AG04449 (cell line): ENCODE measurements at regions of chr2 and their contacts with region 1.

Region 1: DNA sequence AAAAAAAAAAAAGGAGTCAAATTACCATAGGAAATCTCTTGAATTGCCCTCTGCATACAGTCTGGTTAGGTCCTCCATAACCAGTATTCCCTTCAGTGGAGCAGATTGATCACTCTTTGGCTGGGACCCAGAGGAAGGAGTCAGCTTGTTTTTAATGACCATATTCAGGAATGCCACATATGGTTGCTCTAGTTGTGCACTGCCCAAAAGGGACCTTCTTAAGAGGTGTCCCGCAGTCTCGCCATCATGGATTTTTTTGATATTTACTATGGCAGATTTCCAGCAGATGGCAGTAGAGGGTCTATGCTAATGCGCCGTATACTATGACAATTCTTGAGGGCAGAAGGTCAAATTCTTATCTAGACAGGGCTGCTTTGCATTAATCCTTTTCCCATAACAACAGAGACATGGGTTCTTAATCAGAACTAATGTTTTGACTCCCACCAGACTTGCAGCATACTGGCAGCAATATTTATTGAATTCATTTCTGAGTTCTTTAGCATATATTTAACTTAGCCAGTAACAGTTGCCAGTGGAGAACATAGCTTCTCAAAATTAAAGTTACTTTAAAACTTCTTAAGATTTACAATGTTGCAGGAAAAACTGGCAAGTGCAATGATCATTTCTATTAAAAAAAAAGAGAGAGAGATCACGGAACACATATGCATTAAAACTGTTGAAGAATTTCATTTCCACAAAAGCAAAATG is 31.8 kb upstream of the INPP4A start:
- DNase-seq: no peak
- H3K4me3 ChIP-seq: no peak overlapping the region
- CTCF ChIP-seq: peak; percentile 61

Region 2: GRCh38 chr2:98433363-98433964 is 20.6 kb after region 1 on chr2:
- CTCF ChIA-PET with region 1: interaction called, 12 read pairs
- POLR2A ChIA-PET with region 1: no interaction called
- DNase-seq: no peak
- H3K4me3 ChIP-seq: no peak overlapping the region
- CTCF ChIP-seq: no peak

Region 3: DNA sequence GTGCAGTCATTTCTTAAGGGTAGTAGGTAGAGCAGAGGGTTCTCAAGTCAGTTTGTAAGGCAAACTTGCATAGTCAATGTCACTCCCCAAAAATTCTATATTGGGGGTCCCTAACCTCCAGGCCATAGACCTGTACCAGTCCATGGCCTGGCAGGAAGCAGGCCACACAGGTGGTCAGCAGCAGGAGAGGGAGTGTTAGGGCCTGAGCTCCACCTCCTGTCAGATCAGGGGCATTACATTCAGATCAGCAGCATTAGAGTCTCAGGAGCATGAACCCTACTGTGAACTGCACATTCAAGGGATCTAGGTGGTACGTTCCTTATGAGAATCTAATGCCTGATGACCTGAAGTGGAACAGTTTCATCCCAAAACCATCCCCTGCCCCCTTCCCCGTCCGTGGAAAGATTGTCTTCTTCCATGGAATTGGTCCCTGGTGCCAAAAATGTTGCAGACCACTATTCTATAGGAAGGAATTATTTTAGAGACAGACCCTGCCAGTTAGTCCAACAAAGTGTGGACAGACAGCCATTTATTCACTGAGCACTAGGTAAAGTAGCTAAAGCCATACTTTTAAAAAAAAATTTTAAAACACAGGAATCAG is 188.7 kb after region 1 on chr2:
- CTCF ChIA-PET with region 1: interaction called, 21 read pairs
- POLR2A ChIA-PET with region 1: no interaction called
- DNase-seq: no peak
- H3K4me3 ChIP-seq: no peak overlapping the region
- CTCF ChIP-seq: peak; percentile 76

Region 4: DNA sequence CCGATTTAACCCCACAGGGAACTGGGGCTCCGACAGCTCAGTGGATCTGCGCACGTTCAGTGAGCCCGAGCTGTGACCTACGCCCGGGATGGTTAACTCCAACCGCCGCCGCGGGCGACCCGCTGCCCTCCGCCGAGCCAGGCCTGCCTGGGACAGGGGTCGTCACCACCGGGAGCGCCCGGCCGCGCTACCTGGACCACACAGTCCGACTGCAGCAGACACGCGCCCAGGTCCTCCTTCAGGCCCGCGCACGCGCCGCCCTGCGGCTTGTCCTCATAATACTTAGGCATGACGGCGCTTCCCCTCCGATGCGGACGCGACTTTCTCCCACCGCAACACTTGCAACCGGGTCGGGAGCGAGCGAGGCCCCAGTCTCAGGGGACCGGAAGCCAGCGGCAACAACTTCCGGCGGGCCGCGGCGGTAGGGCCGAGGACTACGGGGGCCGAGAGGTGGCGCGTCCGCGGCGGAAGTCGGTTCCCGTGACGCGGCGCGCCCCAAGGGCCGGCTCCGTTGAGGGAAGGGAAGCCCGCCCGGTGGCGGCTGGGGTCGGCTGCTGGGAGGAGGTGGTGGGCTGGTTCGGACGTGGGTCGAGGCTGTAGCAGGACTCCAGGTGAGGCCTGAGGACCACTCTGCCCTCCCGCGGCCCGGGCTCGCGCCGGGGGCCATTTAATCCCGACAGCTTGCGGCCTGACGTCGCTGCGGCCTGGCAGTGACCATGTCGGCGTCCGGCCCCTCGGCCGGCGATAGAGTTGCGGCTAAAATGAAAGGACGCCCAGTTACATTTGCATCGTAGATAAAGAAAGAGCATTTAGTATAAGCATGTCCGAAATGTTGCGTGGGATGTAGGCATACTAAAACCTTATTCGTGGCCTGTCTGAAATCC is 195.5 kb after region 1 on chr2 and contains the starts of genes COA5 and UNC50:
- CTCF ChIA-PET with region 1: interaction called, 13 read pairs
- POLR2A ChIA-PET with region 1: no interaction called
- DNase-seq: no peak
- H3K4me3 ChIP-seq: peak within 1 kb of the TSS; percentile 92
- CTCF ChIP-seq: peak; percentile 17